ENCODE measurements at regions of chr3 and their contacts with region 1.

Region 1: GRCh38 chr3:36923523-36923943 is 21.3 kb downstream of the TRANK1 start:
- DNase-seq: peak in 1 of 2 experiments; percentile 78
- H3K4me3 ChIP-seq: no peak overlapping the region
- H3K27ac ChIP-seq: no peak overlapping the region
- H3K4me1 ChIP-seq: peaks cover 0 to 4% (median 0%) of the 10 kb centered on the region in 4 experiments; a peak in 1 of 7 replicates
- H3K27me3 ChIP-seq: no peaks in the 10 kb centered on the region
- CTCF ChIP-seq: peak; percentile 60 to 64 (median 63)
- EP300 ChIP-seq: no peak
- POLR2A ChIP-seq: no peak
- RAD21 ChIP-seq: peak; percentile 15 to 45; a peak in 3 of 4 replicates

Region 2: DNA sequence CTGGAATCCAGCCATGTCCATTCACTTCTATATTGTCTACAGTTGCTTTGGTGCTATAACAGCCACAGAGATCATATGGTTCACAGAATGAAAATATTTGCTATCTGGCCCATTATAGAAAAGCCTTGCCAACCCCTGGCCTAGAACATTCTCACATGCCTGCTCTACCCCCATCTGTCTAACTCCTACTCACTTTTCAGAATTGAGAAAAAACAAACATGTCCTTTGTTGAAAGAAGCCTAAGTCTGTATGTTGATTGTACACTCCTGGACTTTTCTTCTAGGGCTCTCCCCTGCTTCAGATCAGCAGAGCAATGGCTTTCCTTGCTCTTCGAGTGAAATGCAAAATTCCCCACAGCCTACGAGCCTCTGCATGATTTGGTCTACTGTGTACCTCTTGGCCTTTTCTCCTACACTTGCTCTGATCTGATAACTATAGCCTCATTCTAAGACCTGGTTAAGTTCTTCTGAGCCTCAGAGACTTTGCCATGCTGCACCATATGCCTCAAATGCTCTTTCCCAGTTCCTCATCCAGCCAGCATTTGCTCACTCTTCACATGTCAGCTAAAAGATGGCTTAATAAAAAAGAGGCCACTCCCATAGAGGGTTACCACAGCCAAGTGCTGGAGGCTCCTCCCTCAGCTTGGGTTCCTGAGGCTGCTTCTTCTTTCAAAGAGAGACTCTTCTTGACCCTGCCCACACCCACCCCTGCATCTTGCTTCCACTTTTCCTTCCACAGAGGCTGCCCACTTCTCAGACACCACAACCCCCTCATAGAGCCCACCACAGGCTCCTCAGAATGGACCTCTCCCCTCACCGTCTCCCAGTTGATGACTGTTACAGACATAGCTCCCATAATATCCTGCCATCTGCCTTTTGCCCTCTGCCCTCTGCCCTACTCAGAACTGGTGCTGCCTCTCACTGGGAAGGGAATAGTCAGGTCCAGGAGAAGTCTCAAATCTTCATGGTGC is 136.3 kb before region 1 on chr3:
- CTCF ChIA-PET with region 1: no interaction called
- POLR2A ChIA-PET with region 1: no interaction called
- DNase-seq: no peak
- H3K4me3 ChIP-seq: no peak overlapping the region
- H3K27ac ChIP-seq: no peak overlapping the region
- H3K4me1 ChIP-seq: no peaks in the 10 kb centered on the region
- H3K27me3 ChIP-seq: no peaks in the 10 kb centered on the region; a peak in 1 of 7 replicates
- CTCF ChIP-seq: no peak
- EP300 ChIP-seq: no peak
- POLR2A ChIP-seq: no peak
- RAD21 ChIP-seq: no peak

Region 3: DNA sequence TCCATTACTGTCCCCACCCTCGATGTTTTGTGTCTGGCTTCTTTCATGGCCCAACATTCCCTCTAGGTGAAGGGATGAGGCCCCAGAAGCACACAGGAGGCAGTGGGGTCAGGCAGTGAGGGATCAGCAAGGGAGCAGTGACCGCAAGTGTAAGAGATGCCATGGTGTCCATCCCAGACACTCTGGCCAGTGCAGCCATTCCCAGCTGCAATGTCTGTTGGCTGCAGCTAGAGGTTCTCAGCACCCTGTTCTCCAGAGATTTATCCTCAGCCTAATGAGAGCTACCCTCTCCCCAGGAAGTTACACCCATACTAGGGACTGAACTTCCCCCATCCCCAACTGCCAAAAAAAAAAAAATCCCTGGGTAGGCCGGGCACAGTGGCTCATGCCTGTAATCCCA is 18.9 kb before region 1 on chr3:
- CTCF ChIA-PET with region 1: interaction called, 48 read pairs
- POLR2A ChIA-PET with region 1: interaction called, 3 read pairs
- DNase-seq: peak; percentile 7 to 44
- H3K4me3 ChIP-seq: no peak overlapping the region
- H3K27ac ChIP-seq: no peak overlapping the region
- H3K4me1 ChIP-seq: no peaks in the 10 kb centered on the region
- H3K27me3 ChIP-seq: no peaks in the 10 kb centered on the region
- CTCF ChIP-seq: peak; percentile 67 to 79 (median 69)
- EP300 ChIP-seq: no peak
- POLR2A ChIP-seq: no peak
- RAD21 ChIP-seq: peak; percentile 75 to 85

Region 4: GRCh38 chr3:36911990-36912804 is 11.3 kb before region 1 on chr3:
- CTCF ChIA-PET with region 1: interaction called, 48 read pairs
- POLR2A ChIA-PET with region 1: interaction called, 3 read pairs
- DNase-seq: no peak
- H3K4me3 ChIP-seq: no peak overlapping the region
- H3K27ac ChIP-seq: no peak overlapping the region
- H3K4me1 ChIP-seq: no peaks in the 10 kb centered on the region
- H3K27me3 ChIP-seq: no peaks in the 10 kb centered on the region
- CTCF ChIP-seq: no peak
- EP300 ChIP-seq: no peak
- POLR2A ChIP-seq: no peak
- RAD21 ChIP-seq: no peak

Region 5: GRCh38 chr3:36944012-36944640 is 20.6 kb after region 1 on chr3:
- CTCF ChIA-PET with region 1: interaction called, 61 read pairs
- POLR2A ChIA-PET with region 1: interaction called, 4 read pairs
- DNase-seq: no peak
- H3K4me3 ChIP-seq: peak overlapping the region; percentile 53 to 64 (median 59)
- H3K27ac ChIP-seq: no peak overlapping the region
- H3K4me1 ChIP-seq: peaks cover 0 to 10% (median 1%) of the 10 kb centered on the region in 4 experiments; a peak in 4 of 7 replicates
- H3K27me3 ChIP-seq: peaks cover 4 to 28% (median 19%) of the 10 kb centered on the region in 4 experiments
- CTCF ChIP-seq: peak in 1 of 3 experiments; percentile 1; a peak in 1 of 4 replicates
- EP300 ChIP-seq: no peak
- POLR2A ChIP-seq: peak in 1 of 2 experiments; percentile 13; a peak in 1 of 3 replicates
- RAD21 ChIP-seq: no peak

Measured in H1 (cell line).